ENCODE measurements at regions of chr7 and their contacts with region 1.

Region 1: DNA sequence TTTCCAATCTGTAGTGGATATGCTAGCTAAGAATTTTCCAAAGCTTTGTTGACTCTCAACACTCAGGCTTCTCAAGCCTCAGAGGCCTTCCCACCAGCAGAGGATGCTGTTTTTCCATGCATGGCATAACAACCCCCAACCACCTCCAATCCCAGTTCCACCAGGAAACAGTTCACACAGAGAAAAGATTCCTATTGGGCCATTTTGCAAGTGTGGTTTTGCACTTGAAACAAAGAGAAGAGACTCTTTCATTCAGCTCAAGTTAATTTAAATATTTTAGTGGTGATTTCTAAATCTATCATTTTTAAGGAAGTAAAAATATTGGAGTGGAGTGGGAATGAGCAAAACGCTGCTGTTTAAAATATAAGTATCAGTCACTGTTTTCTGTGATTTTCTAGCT is 105.6 kb upstream of the COL1A2 start:
- DNase-seq: peak; percentile 68
- H3K4me3 ChIP-seq: no peak overlapping the region; a peak in 1 of 4 replicates
- H3K27ac ChIP-seq: no peak overlapping the region; a peak in 1 of 4 replicates
- H3K4me1 ChIP-seq: peaks cover 2 to 4% of the 10 kb centered on the region in 2 experiments; a peak in 2 of 4 replicates
- H3K27me3 ChIP-seq: no peaks in the 10 kb centered on the region
- CTCF ChIP-seq: peak; percentile 100
- EP300 ChIP-seq: no peak; a peak in 2 of 4 replicates
- RAD21 ChIP-seq: peak; percentile 100

Region 2: DNA sequence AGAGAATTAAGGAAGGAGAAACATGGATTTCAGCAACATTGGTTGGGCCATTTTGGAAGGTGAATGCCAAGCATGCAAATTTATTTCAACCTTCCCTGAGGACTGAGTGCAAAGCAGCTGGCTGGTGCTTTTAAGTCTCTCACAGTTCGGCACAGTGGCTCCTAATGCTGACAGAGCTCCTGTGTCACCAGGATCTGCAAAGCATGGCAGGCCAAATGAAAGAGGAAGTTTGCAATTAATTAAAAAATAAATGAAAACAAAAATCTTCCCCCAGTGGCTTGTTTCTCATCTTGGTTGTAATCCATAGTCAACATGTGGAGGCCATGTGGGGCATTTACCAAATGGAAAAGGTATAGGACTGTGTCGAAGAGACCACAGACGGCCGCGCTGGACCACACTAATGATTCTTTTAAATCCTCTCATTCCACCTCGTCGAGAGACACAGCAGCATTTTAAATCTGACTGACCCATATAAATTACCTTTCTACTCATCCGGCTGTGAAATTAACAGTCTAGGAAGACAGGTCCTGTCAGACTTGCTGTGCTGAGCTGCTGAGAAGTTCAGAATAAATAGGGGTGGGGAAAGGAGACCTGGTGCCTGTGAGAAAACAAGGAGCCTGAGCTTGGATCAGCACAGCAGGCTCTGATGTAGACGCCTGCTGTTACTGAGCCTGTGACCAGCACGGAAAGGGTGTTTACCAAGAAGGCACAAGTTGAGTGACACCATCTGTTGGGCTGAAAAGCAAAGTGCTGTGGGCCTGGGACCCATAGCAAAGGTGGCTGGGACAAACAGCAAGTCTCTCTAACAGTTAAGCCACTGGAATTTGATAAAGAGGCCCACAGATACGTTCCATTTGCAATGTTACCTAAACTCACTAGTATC is 30.4 kb before region 1 on chr7:
- CTCF ChIA-PET with region 1: interaction called, 13 read pairs
- POLR2A ChIA-PET with region 1: no interaction called
- DNase-seq: peak; percentile 17
- H3K4me3 ChIP-seq: no peak overlapping the region
- H3K27ac ChIP-seq: no peak overlapping the region
- H3K4me1 ChIP-seq: peaks cover 0 to 13% of the 10 kb centered on the region in 2 experiments; a peak in 2 of 4 replicates
- H3K27me3 ChIP-seq: no peaks in the 10 kb centered on the region
- CTCF ChIP-seq: no peak
- EP300 ChIP-seq: peak in 1 of 2 experiments; percentile 85; a peak in 1 of 4 replicates
- RAD21 ChIP-seq: peak; percentile 14; the same call in 1 of the 2 replicates

Region 3: DNA sequence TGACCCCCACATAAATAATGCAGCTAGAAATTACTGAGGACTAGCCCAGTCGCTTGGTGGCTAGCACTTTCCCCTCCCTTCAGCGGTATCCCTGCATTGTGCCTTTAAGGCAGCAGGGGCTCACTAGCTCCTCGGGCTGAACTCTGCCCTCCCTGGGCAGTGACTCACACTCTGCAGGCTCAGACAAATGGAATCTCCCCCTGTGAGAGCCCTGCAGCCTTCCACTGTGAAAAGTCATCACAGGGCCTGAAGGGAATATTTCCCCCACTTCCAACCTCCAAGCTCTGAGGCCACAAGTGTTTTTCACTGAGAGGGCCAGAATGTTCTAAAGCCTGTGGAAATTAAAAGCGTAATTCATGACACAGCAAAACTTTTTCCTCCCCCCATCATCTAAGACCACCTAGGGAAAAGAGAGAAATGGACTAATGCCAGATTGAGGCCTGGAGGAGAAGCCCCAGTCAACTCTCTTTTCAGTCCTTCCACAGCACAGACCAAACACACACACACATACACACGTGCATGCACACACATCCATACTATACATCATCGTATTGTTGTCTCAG is 12.0 kb after region 1 on chr7:
- CTCF ChIA-PET with region 1: interaction called, 17 read pairs
- POLR2A ChIA-PET with region 1: no interaction called
- DNase-seq: peak; percentile 27
- H3K4me3 ChIP-seq: no peak overlapping the region
- H3K27ac ChIP-seq: peak overlapping the region; percentile 83 to 99
- H3K4me1 ChIP-seq: peaks cover 14 to 75% of the 10 kb centered on the region in 2 experiments
- H3K27me3 ChIP-seq: no peaks in the 10 kb centered on the region
- CTCF ChIP-seq: peak; percentile 30
- EP300 ChIP-seq: peak in 1 of 2 experiments; percentile 99; a peak in 3 of 4 replicates
- RAD21 ChIP-seq: 0 out of 2 replicates have a peak, but pooled peaks have one; percentile 27

Region 4: DNA sequence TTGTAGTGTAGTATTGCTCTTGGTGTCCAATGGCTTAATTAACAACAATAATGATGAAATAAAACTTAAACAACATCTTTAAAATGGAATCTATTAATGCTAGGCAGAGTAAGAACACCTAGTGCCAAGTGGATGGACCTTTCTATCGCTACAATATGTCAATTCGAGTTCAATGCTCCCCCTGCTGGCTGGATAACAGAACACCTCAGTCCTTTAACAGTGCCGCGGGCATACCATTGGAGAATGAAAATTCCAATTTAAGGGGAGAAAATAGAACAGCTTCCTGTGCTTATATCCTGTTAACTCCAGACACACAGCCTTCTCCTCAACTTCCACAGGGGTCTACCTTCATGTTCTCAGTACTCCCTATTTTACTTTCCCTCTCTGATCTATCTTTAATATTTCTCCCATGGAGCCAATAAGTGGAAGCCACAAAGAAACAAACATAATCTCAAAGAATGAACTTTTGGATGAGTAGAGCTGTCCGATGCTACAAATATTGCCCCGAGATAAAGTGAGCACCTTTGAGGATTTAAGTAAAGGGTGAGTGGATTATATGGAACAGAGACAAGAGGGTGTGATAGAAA is 147.0 kb after region 1 on chr7:
- CTCF ChIA-PET with region 1: interaction called, 344 read pairs
- POLR2A ChIA-PET with region 1: no interaction called
- DNase-seq: peak; percentile 57
- H3K4me3 ChIP-seq: no peak overlapping the region; a peak in 1 of 4 replicates
- H3K27ac ChIP-seq: peak overlapping the region in 1 of 2 experiments; percentile 63; a peak in 1 of 4 replicates
- H3K4me1 ChIP-seq: peaks cover 19 to 25% of the 10 kb centered on the region in 2 experiments
- H3K27me3 ChIP-seq: no peaks in the 10 kb centered on the region
- CTCF ChIP-seq: peak; percentile 99
- EP300 ChIP-seq: no peak
- RAD21 ChIP-seq: peak; percentile 88

Region 5: GRCh38 chr7:94657771-94658693 is 369.0 kb after region 1 on chr7:
- CTCF ChIA-PET with region 1: interaction called, 12 read pairs
- POLR2A ChIA-PET with region 1: no interaction called
- DNase-seq: peak; percentile 87
- H3K4me3 ChIP-seq: peak overlapping the region in 1 of 2 experiments; percentile 94; a peak in 2 of 4 replicates
- H3K27ac ChIP-seq: peak overlapping the region in 1 of 2 experiments; percentile 12; a peak in 1 of 4 replicates
- H3K4me1 ChIP-seq: peaks cover 10 to 15% of the 10 kb centered on the region in 2 experiments; a peak in 3 of 4 replicates
- H3K27me3 ChIP-seq: no peaks in the 10 kb centered on the region
- CTCF ChIP-seq: no peak
- EP300 ChIP-seq: no peak
- RAD21 ChIP-seq: peak; percentile 10; the same call in 1 of the 2 replicates

Region 6: DNA sequence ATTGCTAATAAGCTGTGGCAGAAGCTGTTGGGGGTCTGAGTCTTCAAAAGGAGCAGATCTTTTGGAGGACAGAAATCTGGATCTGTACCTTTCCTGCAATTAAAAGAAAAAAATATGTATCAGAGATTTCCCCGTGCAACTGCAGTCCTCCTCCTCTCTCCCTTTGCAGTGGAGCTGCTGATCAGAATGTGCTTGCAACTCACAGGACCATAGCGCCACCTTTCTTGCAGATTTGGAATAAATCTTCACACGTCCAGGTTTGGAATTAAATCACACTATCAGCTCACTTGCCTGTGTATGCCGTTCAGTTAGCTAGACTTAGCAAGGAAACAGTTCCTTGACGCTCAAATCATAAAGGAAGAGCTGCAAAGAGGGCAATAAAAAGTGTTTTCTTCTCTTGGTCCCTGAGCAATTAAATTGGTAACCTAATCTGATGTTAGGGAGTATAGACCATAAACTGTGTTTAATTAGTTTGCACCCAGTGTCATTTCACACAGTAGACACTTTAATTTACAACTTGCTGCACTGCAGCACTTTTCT is 957.8 kb after region 1 on chr7:
- CTCF ChIA-PET with region 1: interaction called, 18 read pairs
- POLR2A ChIA-PET with region 1: no interaction called
- DNase-seq: peak; percentile 55
- H3K4me3 ChIP-seq: peak overlapping the region; percentile 21 to 25; a peak in 2 of 4 replicates
- H3K27ac ChIP-seq: no peak overlapping the region
- H3K4me1 ChIP-seq: peaks cover 0 to 4% of the 10 kb centered on the region in 2 experiments; a peak in 2 of 4 replicates
- H3K27me3 ChIP-seq: no peaks in the 10 kb centered on the region
- CTCF ChIP-seq: peak; percentile 84
- EP300 ChIP-seq: no peak
- RAD21 ChIP-seq: peak; percentile 87

Measured in SK-N-SH (cell line).